A673 (cell line): ENCODE measurements at regions of chr20 and their contacts with region 1.

Region 1: GRCh38 chr20:58087193-58087858 is 141.1 kb downstream of the ANKRD60 start:
- DNase-seq: peak; percentile 71
- H3K4me3 ChIP-seq: no peak overlapping the region
- H3K27ac ChIP-seq: no peak overlapping the region
- H3K4me1 ChIP-seq: no peaks in the 10 kb centered on the region
- H3K27me3 ChIP-seq: no peaks in the 10 kb centered on the region
- CTCF ChIP-seq: peak; percentile 88

Region 2: GRCh38 chr20:57654363-57654997 is 432.8 kb before region 1 on chr20:
- CTCF ChIA-PET with region 1: interaction called, 6 read pairs
- POLR2A ChIA-PET with region 1: no interaction called
- intact Hi-C with region 1: loop called (anchors 1 kb)
- DNase-seq: peak; percentile 65
- H3K4me3 ChIP-seq: no peak overlapping the region
- H3K27ac ChIP-seq: no peak overlapping the region
- H3K4me1 ChIP-seq: peaks cover 6% of the 10 kb centered on the region
- H3K27me3 ChIP-seq: no peaks in the 10 kb centered on the region
- CTCF ChIP-seq: peak; percentile 88

Region 3: GRCh38 chr20:58150772-58151171 is 63.4 kb after region 1 on chr20:
- CTCF ChIA-PET with region 1: no interaction called
- POLR2A ChIA-PET with region 1: no interaction called
- intact Hi-C with region 1: no loop called
- DNase-seq: no peak
- H3K4me3 ChIP-seq: no peak overlapping the region
- H3K27ac ChIP-seq: no peak overlapping the region
- H3K4me1 ChIP-seq: no peaks in the 10 kb centered on the region
- H3K27me3 ChIP-seq: peaks cover 12% of the 10 kb centered on the region
- CTCF ChIP-seq: no peak

Region 4: DNA sequence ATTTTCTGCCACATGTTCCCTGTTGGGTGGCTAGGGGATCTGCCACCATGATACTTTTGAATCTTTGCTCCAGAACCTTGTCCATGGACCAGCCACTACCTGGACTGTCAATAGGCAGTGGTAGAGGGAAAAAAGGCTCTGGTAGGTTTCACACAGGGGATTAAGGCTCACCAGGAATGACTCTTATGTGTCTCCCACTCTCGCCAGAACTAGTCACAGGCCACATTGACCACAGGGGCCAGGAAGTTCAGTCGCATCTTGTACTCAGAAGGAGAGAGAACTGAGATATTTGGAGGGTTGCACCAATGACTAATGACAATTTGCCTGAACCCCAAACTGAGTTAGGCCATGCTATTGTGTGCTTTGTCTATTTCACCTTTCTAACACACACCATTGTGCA is 451.4 kb after region 1 on chr20:
- CTCF ChIA-PET with region 1: no interaction called
- POLR2A ChIA-PET with region 1: no interaction called
- intact Hi-C with region 1: no loop called
- DNase-seq: no peak
- H3K4me3 ChIP-seq: no peak overlapping the region
- H3K27ac ChIP-seq: no peak overlapping the region
- H3K4me1 ChIP-seq: no peaks in the 10 kb centered on the region
- H3K27me3 ChIP-seq: no peaks in the 10 kb centered on the region
- CTCF ChIP-seq: no peak